MCF 10A (cell line): ENCODE measurements at regions of chr15 and their contacts with region 1.

Region 1: DNA sequence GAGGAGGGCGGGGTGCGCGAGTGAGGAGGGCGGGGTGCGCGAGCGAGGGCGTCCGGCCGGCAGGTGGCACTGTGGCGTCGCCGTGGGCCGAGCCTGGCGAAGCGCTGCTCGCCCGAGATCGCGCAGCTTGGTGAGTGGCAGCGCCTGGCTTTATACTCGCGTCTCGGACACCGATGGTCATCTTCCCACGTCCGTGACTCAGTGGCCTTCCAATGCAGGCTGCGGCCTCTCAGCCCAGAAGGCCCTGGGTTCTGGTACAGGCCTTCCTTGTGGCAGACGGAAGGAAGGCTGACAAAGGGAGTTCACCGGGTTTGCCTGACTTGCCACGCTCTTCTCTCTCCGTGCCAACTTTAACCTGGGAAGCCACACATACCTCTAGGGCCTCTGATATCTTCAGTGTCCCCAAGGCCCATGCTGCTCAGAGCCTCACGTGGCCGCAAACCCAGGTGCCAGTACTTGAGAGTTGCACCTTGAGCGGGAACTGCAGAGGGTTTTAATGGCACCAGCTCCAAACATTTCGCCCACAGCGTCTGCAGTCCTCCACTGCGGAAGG is 195.3 kb upstream of the LYSMD4 start:
- DNase-seq: peak; percentile 70
- H3K4me3 Mint-ChIP-seq: peak overlapping the region; percentile 70
- H3K27ac Mint-ChIP-seq: no peak overlapping the region
- H3K4me1 Mint-ChIP-seq: peaks cover 24% of the 10 kb centered on the region
- H3K27me3 Mint-ChIP-seq: peaks cover 7% of the 10 kb centered on the region
- CTCF ChIP-seq: peak; percentile 71

Region 2: DNA sequence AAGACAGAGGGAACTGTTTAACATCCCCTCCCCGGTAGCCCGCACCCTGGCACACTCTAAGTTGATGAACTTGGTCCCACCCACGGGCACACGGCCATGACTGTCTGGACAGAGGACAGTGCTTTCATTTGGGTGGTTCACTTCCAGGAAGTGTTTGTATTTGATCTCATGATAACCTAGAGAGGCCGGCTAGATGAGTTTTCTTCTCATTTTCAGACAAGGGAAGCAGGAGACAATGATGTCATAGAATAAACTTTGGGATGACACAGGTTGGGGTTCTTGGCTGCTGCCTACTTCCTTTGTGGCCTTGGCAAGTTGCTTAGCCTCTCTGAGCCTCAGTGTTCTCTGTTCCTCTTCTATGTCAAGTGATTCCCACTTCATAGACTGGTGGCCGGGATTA is 179.1 kb before region 1 on chr15:
- CTCF ChIA-PET with region 1: no interaction called
- POLR2A ChIA-PET with region 1: no interaction called
- intact Hi-C with region 1: no loop called
- DNase-seq: no peak
- H3K4me3 Mint-ChIP-seq: no peak overlapping the region
- H3K27ac Mint-ChIP-seq: no peak overlapping the region
- H3K4me1 Mint-ChIP-seq: peaks cover 5% of the 10 kb centered on the region
- H3K27me3 Mint-ChIP-seq: no peaks in the 10 kb centered on the region
- CTCF ChIP-seq: no peak

Region 3: GRCh38 chr15:100111103-100112060 is 182.9 kb after region 1 on chr15:
- CTCF ChIA-PET with region 1: interaction called, 6 read pairs
- POLR2A ChIA-PET with region 1: no interaction called
- intact Hi-C with region 1: loop called (anchors 2 kb)
- DNase-seq: peak; percentile 89
- H3K4me3 Mint-ChIP-seq: peak overlapping the region; percentile 26
- H3K27ac Mint-ChIP-seq: peak overlapping the region; percentile 84
- H3K4me1 Mint-ChIP-seq: peaks cover 31% of the 10 kb centered on the region
- H3K27me3 Mint-ChIP-seq: no peaks in the 10 kb centered on the region
- CTCF ChIP-seq: no peak

Region 4: GRCh38 chr15:100341662-100342560 is 413.4 kb after region 1 on chr15 and contains the start of gene ADAMTS17:
- CTCF ChIA-PET with region 1: interaction called, 64 read pairs
- POLR2A ChIA-PET with region 1: interaction called, 5 read pairs
- intact Hi-C with region 1: loop called (anchors 2 kb)
- DNase-seq: peak; percentile 88
- H3K4me3 Mint-ChIP-seq: peak within 1 kb of the TSS; percentile 59
- H3K27ac Mint-ChIP-seq: no peak within 1 kb of the TSS
- H3K4me1 Mint-ChIP-seq: peaks cover 8% of the 10 kb centered on the region
- H3K27me3 Mint-ChIP-seq: no peaks in the 10 kb centered on the region
- CTCF ChIP-seq: peak; percentile 76
- total RNA-seq, gene ADAMTS17: 4.0 and 7.7 TPM in 2 replicates

Region 5: DNA sequence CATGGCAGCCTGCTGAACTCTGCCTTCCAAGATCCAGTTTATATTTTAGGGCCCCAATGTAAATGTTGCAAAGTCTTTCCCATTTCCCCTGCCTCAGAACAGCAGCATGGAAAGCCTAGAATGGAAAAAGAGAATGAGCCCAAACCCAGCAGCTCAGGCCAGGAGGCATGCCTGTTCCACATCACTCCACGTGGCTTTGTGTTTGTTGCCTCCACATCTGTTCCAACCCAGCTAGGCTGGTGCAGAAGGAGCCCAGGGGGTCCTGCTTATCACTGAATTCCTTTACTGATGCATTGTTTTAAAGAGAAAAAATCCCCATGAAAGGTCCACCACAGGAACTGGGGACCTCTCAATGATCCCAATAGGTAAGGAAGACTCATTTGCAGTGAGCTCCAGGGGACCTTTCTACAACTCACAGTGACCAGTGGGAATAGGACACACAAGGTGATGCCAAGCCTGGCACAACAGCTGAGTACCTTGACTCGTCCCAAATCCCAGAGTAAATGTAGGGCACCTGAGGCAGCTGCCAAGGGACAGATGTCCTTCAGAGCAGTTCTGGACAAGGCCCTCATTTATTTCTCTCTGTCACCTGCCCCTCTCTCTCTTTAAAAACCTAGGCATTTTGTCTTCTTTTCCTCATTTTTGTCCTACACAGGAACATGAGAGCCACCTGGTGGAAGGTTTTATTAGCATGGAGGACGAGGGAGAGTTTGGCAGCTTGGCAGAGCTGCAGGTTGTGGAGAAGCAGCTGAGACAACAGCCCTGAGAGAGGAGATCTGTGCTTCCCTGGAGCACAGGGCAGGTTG is 455.0 kb after region 1 on chr15:
- CTCF ChIA-PET with region 1: interaction called, 4 read pairs
- POLR2A ChIA-PET with region 1: interaction called, 3 read pairs
- intact Hi-C with region 1: loop called (anchors 2 kb)
- DNase-seq: peak; percentile 50
- H3K4me3 Mint-ChIP-seq: no peak overlapping the region
- H3K27ac Mint-ChIP-seq: no peak overlapping the region
- H3K4me1 Mint-ChIP-seq: peaks cover 5% of the 10 kb centered on the region
- H3K27me3 Mint-ChIP-seq: no peaks in the 10 kb centered on the region
- CTCF ChIP-seq: peak; percentile 60